ENCODE measurements at regions of chr17 and their contacts with region 1.

Region 1: GRCh38 chr17:6701719-6702118 is 11.4 kb downstream of the SLC13A5 start:
- DNase-seq: peak in 5 of 9 donors; percentile 10 to 34 (median 18)
- ATAC-seq: peak; percentile 69
- H3K4me3 ChIP-seq: no peak overlapping the region
- H3K4me3 Mint-ChIP-seq: no peak overlapping the region
- H3K27ac ChIP-seq: no peak overlapping the region
- H3K27ac Mint-ChIP-seq: no peak overlapping the region
- H3K4me1 ChIP-seq: no peaks in the 10 kb centered on the region
- H3K4me1 Mint-ChIP-seq: peaks cover 0 to 2% (median 0%) of the 10 kb centered on the region in 7 donors
- H3K27me3 ChIP-seq: no peaks in the 10 kb centered on the region
- H3K27me3 Mint-ChIP-seq: peaks cover 5 to 23% (median 17%) of the 10 kb centered on the region in 5 donors

Region 2: DNA sequence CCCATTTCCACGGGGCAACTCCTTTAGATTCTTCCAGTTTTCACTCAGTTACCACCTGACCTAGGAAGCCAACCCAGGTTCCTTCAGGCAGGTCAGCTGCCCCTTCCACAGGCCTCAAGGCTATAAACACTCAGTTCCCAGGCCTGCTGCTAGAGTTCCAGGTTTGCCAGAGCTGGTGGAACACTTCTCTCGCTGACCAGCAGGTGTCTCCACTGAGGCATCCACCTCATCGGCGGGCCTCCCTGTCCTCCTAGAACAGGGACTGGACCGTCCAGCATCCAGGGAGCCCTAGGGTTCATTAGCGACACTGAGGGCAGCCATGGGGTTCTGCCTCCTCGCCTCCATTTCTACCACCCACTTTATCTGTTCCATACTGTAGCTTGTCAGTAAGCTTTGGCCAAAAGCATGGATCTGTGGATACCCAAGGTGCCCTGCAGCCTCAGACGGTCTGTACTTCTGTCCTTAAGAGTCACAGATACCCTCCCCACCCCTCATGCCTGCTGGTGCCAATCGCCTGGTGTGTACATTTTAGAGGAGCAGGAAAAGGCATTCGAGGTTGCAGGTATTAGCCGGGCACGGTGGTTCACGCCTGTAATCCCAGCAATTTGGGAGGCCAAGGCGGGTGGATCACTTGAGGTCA is 228.5 kb before region 1 on chr17:
- CTCF ChIA-PET with region 1: no interaction called
- POLR2A ChIA-PET with region 1: no interaction called
- intact Hi-C with region 1: loop called in 1 of 2 experiments (anchors 2 kb)
- DNase-seq: peak; percentile 16 to 68 (median 57)
- ATAC-seq: peak; percentile 85
- H3K4me3 ChIP-seq: no peak overlapping the region
- H3K4me3 Mint-ChIP-seq: no peak overlapping the region
- H3K27ac ChIP-seq: no peak overlapping the region
- H3K27ac Mint-ChIP-seq: peak overlapping the region in 3 of 9 donors; percentile 22 to 62 (median 47)
- H3K4me1 ChIP-seq: no peaks in the 10 kb centered on the region
- H3K4me1 Mint-ChIP-seq: peaks cover 1 to 6% (median 4%) of the 10 kb centered on the region in 7 donors
- H3K27me3 ChIP-seq: no peaks in the 10 kb centered on the region
- H3K27me3 Mint-ChIP-seq: peaks cover 0 to 6% (median 0%) of the 10 kb centered on the region in 5 donors

Region 3: GRCh38 chr17:6831661-6832263 is 130.0 kb after region 1 on chr17 and contains the start of gene TEKT1:
- CTCF ChIA-PET with region 1: no interaction called
- POLR2A ChIA-PET with region 1: no interaction called
- intact Hi-C with region 1: no loop called
- DNase-seq: peak; percentile 53 to 82 (median 68)
- ATAC-seq: peak; percentile 95
- H3K4me3 ChIP-seq: peak within 1 kb of the TSS; percentile 30
- H3K4me3 Mint-ChIP-seq: peak within 1 kb of the TSS; percentile 73 to 91 (median 85)
- H3K27ac ChIP-seq: no peak within 1 kb of the TSS
- H3K27ac Mint-ChIP-seq: peak within 1 kb of the TSS in 6 of 9 donors; percentile 62 to 94 (median 80)
- H3K4me1 ChIP-seq: no peaks in the 10 kb centered on the region
- H3K4me1 Mint-ChIP-seq: peaks cover 7 to 20% (median 14%) of the 10 kb centered on the region in 7 donors
- H3K27me3 ChIP-seq: peaks cover 22% of the 10 kb centered on the region in 2 donors
- H3K27me3 Mint-ChIP-seq: peaks cover 48 to 73% (median 58%) of the 10 kb centered on the region in 5 donors
- total RNA-seq, gene TEKT1: not detected

Measured in naive thymus-derived CD4-positive, alpha-beta T cell (primary cell).